ENCODE measurements at regions of chr7 and their contacts with region 1.

Region 1: GRCh38 chr7:147547249-147547897 is 1043.2 kb upstream of the C7orf33 start:
- DNase-seq: no peak
- H3K4me3 ChIP-seq: no peak overlapping the region
- H3K27ac ChIP-seq: no peak overlapping the region
- H3K4me1 ChIP-seq: no peaks in the 10 kb centered on the region
- H3K27me3 ChIP-seq: no peaks in the 10 kb centered on the region
- CTCF ChIP-seq: peak in 1 of 3 donors; percentile 12
- POLR2A ChIP-seq: no peak

Region 2: GRCh38 chr7:147136352-147136751 is 411.0 kb before region 1 on chr7:
- intact Hi-C with region 1: loop called (anchors 5 kb)
- DNase-seq: no peak
- H3K4me3 ChIP-seq: no peak overlapping the region
- H3K27ac ChIP-seq: no peak overlapping the region
- H3K4me1 ChIP-seq: no peaks in the 10 kb centered on the region
- H3K27me3 ChIP-seq: no peaks in the 10 kb centered on the region
- CTCF ChIP-seq: no peak
- POLR2A ChIP-seq: no peak

Region 3: GRCh38 chr7:147829016-147829415 is 281.6 kb after region 1 on chr7:
- intact Hi-C with region 1: no loop called
- DNase-seq: no peak
- H3K4me3 ChIP-seq: no peak overlapping the region
- H3K27ac ChIP-seq: no peak overlapping the region
- H3K4me1 ChIP-seq: no peaks in the 10 kb centered on the region
- H3K27me3 ChIP-seq: no peaks in the 10 kb centered on the region
- CTCF ChIP-seq: no peak
- POLR2A ChIP-seq: no peak

Measured in breast epithelium (tissue), 4 donors.